Cardiac septum (tissue), 1 donor: ENCODE measurements at regions of chr3 and their contacts with region 1.

Region 1: DNA sequence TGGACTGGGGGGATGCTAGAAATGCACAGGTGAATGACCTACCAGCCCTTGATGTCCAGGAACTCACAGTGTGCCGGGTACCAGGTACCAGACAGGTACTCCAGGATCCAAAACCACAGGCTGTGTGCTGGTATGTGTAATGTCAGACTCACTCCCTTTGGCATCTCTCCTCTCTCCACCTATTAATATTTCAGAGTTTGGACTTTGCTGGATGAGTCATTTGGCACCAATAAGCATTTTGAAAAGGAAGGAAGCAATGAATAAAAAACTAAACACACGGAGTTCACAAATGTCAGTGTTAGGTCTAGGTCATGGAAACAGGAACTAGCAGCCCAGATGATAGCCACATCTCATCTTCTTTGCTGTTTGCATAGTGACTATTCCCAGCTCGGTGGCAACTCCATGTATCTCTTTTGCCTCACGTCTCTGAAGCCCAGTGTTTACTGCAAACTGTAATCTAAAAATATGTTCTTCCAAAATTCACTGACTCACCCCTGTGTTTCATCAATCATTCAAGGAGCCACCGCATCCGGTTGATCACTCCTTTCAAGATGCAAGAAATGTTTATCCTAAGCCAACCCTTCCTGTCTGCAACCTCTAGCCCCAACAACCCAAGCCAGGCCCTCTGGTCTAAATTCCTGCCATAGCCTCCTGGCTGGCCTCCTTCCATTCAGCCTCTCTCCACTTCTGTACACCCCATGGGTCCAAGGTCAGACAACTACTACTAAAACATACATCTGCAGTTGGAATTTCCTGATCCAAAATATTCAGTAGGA is 8.4 kb downstream of the ITGB5 start:
- DNase-seq: peak; percentile 66

Region 2: GRCh38 chr3:124688581-124689454 is 189.9 kb before region 1 on chr3:
- intact Hi-C with region 1: no loop called
- DNase-seq: no peak

Region 3: GRCh38 chr3:124834723-124835718 is 43.7 kb before region 1 on chr3:
- intact Hi-C with region 1: loop called (anchors 2 kb)
- DNase-seq: no peak

Region 4: DNA sequence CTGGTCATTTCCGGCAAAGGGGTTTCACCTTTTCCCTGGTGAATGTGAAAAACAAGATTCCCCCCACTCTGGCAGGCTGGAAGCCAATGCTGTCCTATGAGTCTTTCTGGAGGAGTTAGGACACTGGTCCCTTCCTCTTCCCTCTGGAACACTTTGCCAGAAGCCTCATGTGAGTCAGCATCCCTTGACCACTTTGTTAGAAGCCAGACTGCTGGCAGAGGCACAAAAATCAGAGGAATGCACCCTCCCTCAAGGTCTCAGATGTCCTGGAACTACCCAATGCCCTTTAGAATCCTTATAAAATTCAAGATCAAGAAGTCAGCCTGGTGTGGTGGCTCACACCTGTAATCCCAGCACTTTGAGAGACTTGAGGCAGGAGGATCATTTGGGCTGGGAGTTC is 18.1 kb before region 1 on chr3:
- intact Hi-C with region 1: loop called (anchors 2 kb)
- DNase-seq: peak; percentile 89

Region 5: GRCh38 chr3:124995460-124995994 is 116.8 kb after region 1 on chr3:
- intact Hi-C with region 1: no loop called
- DNase-seq: no peak

Region 6: GRCh38 chr3:125334675-125335560 is 456.2 kb after region 1 on chr3:
- intact Hi-C with region 1: no loop called
- DNase-seq: no peak